ENCODE measurements at regions of chr5 and their contacts with region 1.

Region 1: GRCh38 chr5:32312647-32313523 is at the start of gene MTMR12:
- DNase-seq: peak; percentile 100
- ATAC-seq: peak; percentile 89
- H3K4me3 Mint-ChIP-seq: peak within 1 kb of the TSS; percentile 90
- H3K27ac Mint-ChIP-seq: peak within 1 kb of the TSS; percentile 91
- H3K4me1 Mint-ChIP-seq: peaks cover 41% of the 10 kb centered on the region
- H3K27me3 Mint-ChIP-seq: no peaks in the 10 kb centered on the region
- CTCF ChIP-seq: no peak
- total RNA-seq, gene MTMR12: 26.8 and 36.3 TPM in 2 replicates

Region 2: DNA sequence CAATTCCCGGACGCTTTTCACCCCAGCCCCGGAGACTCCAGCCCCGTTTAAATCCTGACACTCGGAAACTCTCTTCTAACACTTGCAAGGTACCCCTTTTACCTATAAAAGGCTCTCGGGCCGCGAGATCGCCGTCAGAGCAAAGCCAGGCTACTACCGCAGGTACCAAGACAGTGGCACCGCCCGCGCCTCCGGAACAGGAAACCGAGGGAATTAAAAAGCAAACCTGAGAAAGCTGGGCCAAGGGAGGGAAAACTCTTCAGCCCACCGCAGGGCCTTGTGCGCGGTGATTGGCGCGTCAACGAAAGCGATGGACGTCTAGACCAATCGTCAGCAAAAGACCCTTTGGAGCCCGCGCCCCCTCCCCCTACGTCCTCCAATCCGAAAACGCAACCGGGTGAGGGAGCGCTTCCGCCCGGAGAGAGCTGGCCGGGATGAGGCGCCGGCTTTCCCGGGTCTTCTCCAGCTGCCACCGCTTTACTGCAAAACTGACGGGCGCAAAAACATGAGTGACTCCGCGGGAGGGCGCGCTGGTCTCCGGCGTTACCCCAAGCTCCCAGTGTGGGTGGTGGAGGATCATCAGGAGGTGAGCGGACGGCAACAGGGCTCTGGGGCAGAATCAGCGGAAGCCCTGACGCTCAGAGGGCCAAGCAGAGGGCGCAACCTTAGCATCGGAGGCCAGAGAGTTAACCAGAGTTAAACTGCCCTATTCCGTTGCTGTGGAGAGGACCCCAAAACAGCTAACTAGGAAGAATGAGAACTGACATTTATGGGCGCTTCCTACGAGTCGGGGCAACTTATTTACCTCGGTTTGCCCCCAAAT is 780.8 kb before region 1 on chr5 and contains the starts of genes C5orf22 and DROSHA:
- CTCF ChIA-PET with region 1: no interaction called
- POLR2A ChIA-PET with region 1: no interaction called
- intact Hi-C with region 1: loop called (anchors 1 kb)
- DNase-seq: peak; percentile 81
- ATAC-seq: peak; percentile 98
- H3K4me3 Mint-ChIP-seq: peak within 1 kb of the TSS; percentile 99
- H3K27ac Mint-ChIP-seq: peak within 1 kb of the TSS; percentile 92
- H3K4me1 Mint-ChIP-seq: peaks cover 43% of the 10 kb centered on the region
- H3K27me3 Mint-ChIP-seq: no peaks in the 10 kb centered on the region
- CTCF ChIP-seq: no peak
- total RNA-seq, gene C5orf22: 27.0 and 27.1 TPM in 2 replicates
- total RNA-seq, gene DROSHA: 53.8 and 59.8 TPM in 2 replicates

Region 3: DNA sequence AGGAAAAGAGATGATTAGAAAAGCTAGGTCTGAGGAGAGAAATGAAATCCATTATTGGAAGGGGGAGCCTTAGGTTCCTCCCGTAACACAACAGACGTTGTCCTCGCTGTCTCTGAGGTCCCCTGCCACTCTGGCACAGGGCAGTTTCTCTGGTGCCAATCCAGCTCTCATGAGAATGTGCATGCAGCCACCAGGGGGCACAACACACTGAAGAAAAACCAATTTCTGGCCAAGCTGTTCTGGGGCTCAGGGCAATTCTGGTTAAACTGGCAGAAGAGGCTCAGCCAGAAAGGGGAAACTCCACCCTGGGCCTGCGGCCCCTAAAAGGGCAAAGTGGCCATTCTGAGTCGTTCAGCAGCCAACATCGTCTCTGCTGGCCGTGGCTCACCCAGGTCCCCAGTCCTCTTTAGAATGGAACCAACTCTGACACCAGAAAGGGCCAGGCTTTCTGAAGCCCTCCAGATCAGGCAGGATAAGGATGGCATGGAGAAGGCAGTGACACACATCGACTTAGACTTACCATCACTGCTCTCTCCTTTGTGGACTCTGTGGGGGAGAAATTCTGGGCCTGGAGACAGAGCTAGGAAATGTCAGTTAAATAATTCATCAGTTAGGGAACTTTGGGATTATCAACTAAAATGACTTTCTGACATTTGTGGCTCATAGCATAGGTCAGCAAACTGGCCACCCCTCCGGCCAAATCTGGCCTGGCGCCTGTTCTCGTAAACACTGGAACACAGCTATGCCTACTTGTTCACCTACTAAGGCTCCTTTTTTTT is 80.3 kb before region 1 on chr5:
- CTCF ChIA-PET with region 1: interaction called, 3 read pairs
- POLR2A ChIA-PET with region 1: interaction called, 4 read pairs
- intact Hi-C with region 1: loop called (anchors 5 kb)
- DNase-seq: peak; percentile 62
- ATAC-seq: peak; percentile 87
- H3K4me3 Mint-ChIP-seq: no peak overlapping the region
- H3K27ac Mint-ChIP-seq: peak overlapping the region; percentile 10
- H3K4me1 Mint-ChIP-seq: peaks cover 21% of the 10 kb centered on the region
- H3K27me3 Mint-ChIP-seq: no peaks in the 10 kb centered on the region
- CTCF ChIP-seq: no peak

Region 4: DNA sequence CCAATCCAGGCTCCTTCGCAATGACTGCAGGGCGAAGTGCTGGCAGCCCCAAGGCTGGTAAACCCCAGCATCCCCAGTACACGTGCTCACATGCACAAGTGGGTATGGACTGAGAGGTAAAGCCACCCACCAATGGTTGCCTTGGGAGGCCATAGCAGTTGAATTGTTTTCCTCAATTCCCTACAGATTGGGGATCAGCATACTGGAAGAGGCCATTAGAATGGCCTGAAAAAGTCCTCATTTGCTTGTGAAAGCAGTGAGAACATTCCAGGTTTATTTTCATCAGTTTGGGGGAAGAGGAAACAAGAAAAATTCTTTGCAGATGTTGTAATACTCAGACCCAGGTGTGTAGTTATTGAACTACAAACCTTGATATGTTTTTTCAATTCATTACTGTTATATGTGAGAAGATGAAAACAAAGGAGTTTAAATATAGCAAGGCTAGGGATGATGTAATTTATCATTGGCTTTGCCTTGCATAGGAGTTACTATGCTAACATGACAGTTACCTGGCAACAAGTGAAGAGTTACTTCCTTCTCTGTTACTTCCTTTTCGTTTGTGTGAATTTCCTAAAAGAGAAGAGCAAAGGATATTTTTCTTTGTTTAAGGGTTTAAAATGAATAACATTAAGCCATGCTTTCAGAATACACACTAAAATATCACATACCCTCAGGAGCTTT is 36.6 kb before region 1 on chr5:
- CTCF ChIA-PET with region 1: no interaction called
- POLR2A ChIA-PET with region 1: interaction called, 4 read pairs
- intact Hi-C with region 1: loop called (anchors 1 kb)
- DNase-seq: no peak
- ATAC-seq: peak; percentile 76
- H3K4me3 Mint-ChIP-seq: peak overlapping the region; percentile 61
- H3K27ac Mint-ChIP-seq: peak overlapping the region; percentile 92
- H3K4me1 Mint-ChIP-seq: peaks cover 67% of the 10 kb centered on the region
- H3K27me3 Mint-ChIP-seq: no peaks in the 10 kb centered on the region
- CTCF ChIP-seq: no peak

Region 5: DNA sequence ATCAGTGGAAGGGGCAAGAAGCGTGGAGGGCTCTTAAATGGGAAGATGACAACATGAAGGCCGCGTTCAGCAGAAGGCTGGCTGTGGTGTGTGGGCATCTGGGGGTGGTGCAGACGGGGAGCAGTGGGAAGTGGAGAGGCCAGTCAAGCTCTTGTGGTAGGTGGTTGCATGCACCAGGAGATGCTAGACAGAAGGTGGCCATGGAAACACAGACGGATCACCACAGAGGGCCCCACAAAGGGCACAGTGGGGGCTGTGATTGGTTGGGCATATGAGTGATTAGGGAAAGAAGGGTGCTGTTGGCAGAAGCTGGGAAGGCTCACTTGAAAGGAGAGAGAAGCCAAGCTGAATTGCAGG is 14.8 kb before region 1 on chr5:
- CTCF ChIA-PET with region 1: no interaction called
- POLR2A ChIA-PET with region 1: no interaction called
- intact Hi-C with region 1: loop called (anchors 1 kb)
- DNase-seq: no peak
- ATAC-seq: peak; percentile 68
- H3K4me3 Mint-ChIP-seq: no peak overlapping the region
- H3K27ac Mint-ChIP-seq: peak overlapping the region; percentile 46
- H3K4me1 Mint-ChIP-seq: peaks cover 65% of the 10 kb centered on the region
- H3K27me3 Mint-ChIP-seq: no peaks in the 10 kb centered on the region
- CTCF ChIP-seq: no peak

Region 6: GRCh38 chr5:33440482-33441240 is 1127.8 kb after region 1 on chr5 and contains the start of gene TARS1:
- CTCF ChIA-PET with region 1: no interaction called
- POLR2A ChIA-PET with region 1: no interaction called
- intact Hi-C with region 1: loop called (anchors 10 kb)
- DNase-seq: peak; percentile 89
- ATAC-seq: peak; percentile 95
- H3K4me3 Mint-ChIP-seq: no peak within 1 kb of the TSS
- H3K27ac Mint-ChIP-seq: no peak within 1 kb of the TSS
- H3K4me1 Mint-ChIP-seq: peaks cover 21% of the 10 kb centered on the region
- H3K27me3 Mint-ChIP-seq: no peaks in the 10 kb centered on the region
- CTCF ChIP-seq: no peak
- total RNA-seq, gene TARS1: 176 and 180 TPM in 2 replicates